WTC11 (cell line): ENCODE measurements at regions of chr4 and their contacts with region 1.

Region 1: DNA sequence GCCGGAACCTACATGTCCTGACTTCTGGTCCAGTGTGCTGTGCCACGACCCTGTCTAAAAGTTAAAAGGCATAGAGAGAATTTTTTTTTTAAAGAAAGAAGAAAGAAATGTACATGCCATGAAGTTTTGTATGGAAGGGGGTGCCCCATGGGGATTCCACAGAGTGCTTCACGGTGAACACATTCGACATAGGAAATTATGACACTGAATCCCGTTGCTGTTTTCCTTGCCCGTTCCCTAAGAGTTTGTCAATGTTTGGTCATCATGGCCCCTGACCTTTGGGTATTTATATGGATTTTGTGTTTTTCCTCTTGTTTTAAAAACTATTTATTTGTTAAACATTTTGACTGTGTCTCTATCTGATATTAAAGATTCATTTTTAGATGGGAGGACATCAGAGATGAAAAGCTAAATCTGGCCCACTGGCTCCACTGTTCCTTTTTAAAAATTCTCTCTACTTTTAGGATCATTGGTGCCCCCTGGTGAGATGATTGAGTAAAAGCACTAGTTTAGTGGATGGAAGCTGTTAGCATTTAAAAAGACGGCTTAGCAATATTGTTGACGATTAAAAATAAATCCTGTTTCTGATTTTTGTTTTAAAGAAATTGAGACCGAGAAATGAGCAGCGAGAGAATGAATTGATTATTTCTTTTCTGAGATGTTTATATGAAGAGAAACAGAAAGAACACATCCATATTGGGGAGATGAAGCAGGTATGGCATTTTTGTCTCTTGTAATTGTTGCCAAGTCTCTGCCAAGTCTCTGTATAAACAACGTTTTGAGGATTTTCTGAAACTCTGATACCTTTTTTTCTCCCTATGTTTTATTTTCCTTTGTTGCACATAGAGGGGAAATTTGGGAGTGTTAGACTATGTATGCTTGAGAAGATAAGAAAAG is 75.0 kb downstream of the PTTG2 start:
- DNase-seq: no peak
- ATAC-seq: peak; percentile 73
- H3K4me3 Mint-ChIP-seq: no peak overlapping the region
- H3K27ac Mint-ChIP-seq: peak overlapping the region; percentile 38; the same call in 1 of the 2 replicates
- H3K4me1 Mint-ChIP-seq: peaks cover 2% of the 10 kb centered on the region; the same call in 1 of the 2 replicates
- H3K27me3 Mint-ChIP-seq: no peaks in the 10 kb centered on the region
- CTCF ChIP-seq: 0 out of 2 replicates have a peak, but pooled peaks have one; percentile 24

Region 2: DNA sequence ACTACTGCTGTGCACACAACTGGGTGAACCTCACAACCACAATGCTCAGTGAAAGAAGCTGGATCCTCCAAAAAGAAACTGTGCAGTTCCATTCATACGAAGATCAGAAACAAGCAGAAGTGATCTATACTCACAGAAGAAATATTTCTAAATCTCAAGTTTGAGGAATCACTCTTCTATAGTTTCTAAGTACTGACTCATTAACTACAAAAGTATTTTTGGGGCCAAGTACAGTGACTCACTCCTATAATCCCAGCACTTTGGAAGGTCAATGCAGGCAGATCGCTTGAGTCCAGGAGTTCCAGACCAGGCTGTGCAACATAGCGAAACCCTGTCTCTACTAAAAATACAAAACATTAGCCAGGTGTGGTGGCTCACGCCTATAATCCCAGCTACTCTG is 297.8 kb before region 1 on chr4:
- CTCF ChIA-PET with region 1: no interaction called
- POLR2A ChIA-PET with region 1: no interaction called
- DNase-seq: no peak
- ATAC-seq: no peak
- H3K4me3 Mint-ChIP-seq: no peak overlapping the region
- H3K27ac Mint-ChIP-seq: no peak overlapping the region
- H3K4me1 Mint-ChIP-seq: no peaks in the 10 kb centered on the region
- H3K27me3 Mint-ChIP-seq: peaks cover 4% of the 10 kb centered on the region
- CTCF ChIP-seq: no peak

Region 3: DNA sequence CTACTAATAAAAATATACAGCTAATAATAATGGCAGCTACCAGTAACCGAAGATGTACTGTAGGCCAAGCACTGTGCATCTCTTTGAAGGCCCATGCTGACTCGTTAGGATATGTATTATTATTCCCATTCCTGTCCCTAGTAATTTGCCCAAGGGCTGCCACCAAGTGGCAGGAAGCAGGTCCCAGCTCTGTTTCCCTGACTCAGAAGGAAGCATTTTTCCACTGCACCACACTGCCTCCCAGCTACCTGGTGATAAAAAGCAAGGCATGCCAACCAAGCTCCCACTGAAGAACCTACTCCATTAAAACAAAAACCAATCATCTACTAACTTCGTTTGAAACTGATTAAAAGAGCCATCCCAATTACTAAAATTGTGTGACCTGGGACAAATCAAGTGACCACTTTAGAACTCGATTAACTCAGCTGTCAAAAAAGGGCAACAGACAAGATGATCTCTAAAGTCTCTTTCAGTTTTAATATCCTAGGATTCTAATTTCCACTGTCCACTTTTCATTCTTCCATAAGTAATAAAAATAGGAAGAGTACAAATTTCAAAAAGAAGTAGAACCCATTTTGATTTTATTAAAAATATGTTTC is 233.1 kb before region 1 on chr4:
- CTCF ChIA-PET with region 1: interaction called, 12 read pairs
- POLR2A ChIA-PET with region 1: no interaction called
- DNase-seq: peak; percentile 39
- ATAC-seq: peak; percentile 96
- H3K4me3 Mint-ChIP-seq: no peak overlapping the region
- H3K27ac Mint-ChIP-seq: no peak overlapping the region
- H3K4me1 Mint-ChIP-seq: peaks cover 20% of the 10 kb centered on the region
- H3K27me3 Mint-ChIP-seq: no peaks in the 10 kb centered on the region
- CTCF ChIP-seq: no peak

Region 4: GRCh38 chr4:38174801-38175200 is 139.6 kb after region 1 on chr4:
- CTCF ChIA-PET with region 1: no interaction called
- POLR2A ChIA-PET with region 1: no interaction called
- DNase-seq: no peak
- ATAC-seq: no peak
- H3K4me3 Mint-ChIP-seq: no peak overlapping the region
- H3K27ac Mint-ChIP-seq: no peak overlapping the region
- H3K4me1 Mint-ChIP-seq: peaks cover 8% of the 10 kb centered on the region
- H3K27me3 Mint-ChIP-seq: no peaks in the 10 kb centered on the region; the same call in 1 of the 2 replicates
- CTCF ChIP-seq: no peak